HepG2 (cell line): ENCODE measurements at regions of chr2 and their contacts with region 1.

Region 1: GRCh38 chr2:190319555-190320498 is at the start of gene HIBCH:
- DNase-seq: peak; percentile 99
- ATAC-seq: peak; percentile 97
- H3K4me3 ChIP-seq: peak within 1 kb of the TSS; percentile 78 to 86 (median 83)
- H3K27ac ChIP-seq: peak within 1 kb of the TSS; percentile 74
- H3K4me1 ChIP-seq: peaks cover 49% of the 10 kb centered on the region
- H3K27me3 ChIP-seq: no peaks in the 10 kb centered on the region; a peak in 1 of 5 replicates
- CTCF ChIP-seq: peak; percentile 95
- EP300 ChIP-seq: no peak; a peak in 1 of 4 replicates
- POLR2A ChIP-seq: peak; percentile 86 to 90
- RAD21 ChIP-seq: peak; percentile 69; the same call in 1 of the 2 replicates
- total RNA-seq, gene HIBCH: 49.5 and 67.0 TPM in 2 replicates

Region 2: GRCh38 chr2:190180313-190181122 is 139.3 kb before region 1 on chr2:
- CTCF ChIA-PET with region 1: no interaction called
- POLR2A ChIA-PET with region 1: interaction called, 6 read pairs
- in situ Hi-C with region 1: no loop called
- intact Hi-C with region 1: loop called (anchors 10 kb)
- DNase-seq: peak; percentile 86
- ATAC-seq: peak; percentile 94
- H3K4me3 ChIP-seq: peak overlapping the region; percentile 63 to 89 (median 77)
- H3K27ac ChIP-seq: peak overlapping the region; percentile 64
- H3K4me1 ChIP-seq: peaks cover 23% of the 10 kb centered on the region
- H3K27me3 ChIP-seq: no peaks in the 10 kb centered on the region; a peak in 1 of 5 replicates
- CTCF ChIP-seq: peak; percentile 95
- EP300 ChIP-seq: 0 out of 4 replicates have a peak, but pooled peaks of 1 of the 2 experiments have one; percentile 6
- POLR2A ChIP-seq: peak; percentile 31 to 80
- RAD21 ChIP-seq: peak; percentile 92

Region 3: DNA sequence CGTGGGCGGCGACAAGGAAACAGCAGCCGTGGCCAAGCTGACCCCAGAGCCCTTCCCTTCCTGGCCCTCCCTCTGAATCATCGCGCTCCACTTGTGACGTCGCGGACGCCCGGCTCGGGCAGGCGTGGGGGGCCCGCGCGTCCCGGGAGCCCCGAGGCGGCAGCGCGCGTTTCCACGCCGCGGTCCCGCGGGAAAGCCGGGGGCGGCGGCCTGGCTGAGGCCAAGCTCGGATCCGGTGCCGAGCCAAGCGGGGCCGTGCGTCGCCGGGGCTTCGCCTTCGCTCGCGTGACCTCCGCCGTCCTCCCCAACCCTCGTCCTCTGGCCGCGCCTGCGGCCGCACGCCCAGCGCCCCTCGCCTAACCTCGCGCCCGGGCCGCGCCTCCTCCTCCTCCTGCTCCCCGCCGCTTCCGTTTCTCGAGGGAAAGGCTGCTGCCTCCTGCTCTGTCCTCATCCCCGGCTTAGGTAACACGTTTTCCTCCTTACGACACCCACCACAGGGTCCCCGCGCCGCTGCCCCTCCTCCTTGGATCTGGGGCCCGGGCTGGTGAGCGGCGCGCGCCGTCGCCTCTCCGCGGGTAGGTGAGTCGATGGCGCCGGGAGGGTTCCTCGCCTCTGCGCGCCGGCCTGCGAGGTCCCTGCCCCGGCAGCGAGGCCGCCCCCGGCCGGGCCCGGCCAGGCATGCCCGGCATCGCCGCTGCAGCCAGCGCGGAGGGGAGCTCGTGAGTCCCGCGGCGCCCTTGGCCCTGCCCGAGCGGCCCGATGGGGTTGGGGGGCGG is 23.9 kb after region 1 on chr2 and contains the start of gene INPP1:
- CTCF ChIA-PET with region 1: no interaction called
- POLR2A ChIA-PET with region 1: interaction called, 14 read pairs
- in situ Hi-C with region 1: no loop called
- intact Hi-C with region 1: no loop called
- DNase-seq: no peak
- ATAC-seq: peak; percentile 88
- H3K4me3 ChIP-seq: peak within 1 kb of the TSS; percentile 71 to 92 (median 75)
- H3K27ac ChIP-seq: peak within 1 kb of the TSS; percentile 59
- H3K4me1 ChIP-seq: peaks cover 50% of the 10 kb centered on the region
- H3K27me3 ChIP-seq: no peaks in the 10 kb centered on the region
- CTCF ChIP-seq: no peak
- EP300 ChIP-seq: no peak
- POLR2A ChIP-seq: peak in 1 of 2 experiments; percentile 30; a peak in 1 of 4 replicates
- RAD21 ChIP-seq: peak; percentile 77; the same call in 1 of the 2 replicates
- total RNA-seq, gene INPP1: 13.3 and 15.2 TPM in 2 replicates

Region 4: DNA sequence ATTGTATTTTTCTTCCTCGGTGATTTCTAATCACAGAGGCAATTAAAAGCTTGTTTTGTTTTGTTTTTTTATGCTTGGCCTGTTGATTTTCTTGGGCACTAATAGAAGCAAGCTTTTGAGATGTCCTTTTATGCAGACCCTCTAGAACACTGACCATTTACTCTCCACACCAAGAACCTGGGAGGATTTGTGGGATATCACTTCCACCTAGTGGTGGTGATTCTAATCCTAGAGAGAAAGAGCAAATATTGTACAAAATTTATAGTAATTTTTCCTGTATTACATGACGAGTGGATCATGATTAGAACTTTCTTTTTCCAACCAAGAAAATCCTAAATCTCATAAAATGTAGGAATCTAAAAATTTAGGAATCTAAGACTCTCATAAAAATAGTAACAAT is 191.3 kb after region 1 on chr2:
- CTCF ChIA-PET with region 1: no interaction called
- POLR2A ChIA-PET with region 1: no interaction called
- in situ Hi-C with region 1: loop called (anchors 25 kb)
- intact Hi-C with region 1: loop called (anchors 2 kb)
- DNase-seq: peak; percentile 54
- ATAC-seq: peak; percentile 67
- H3K4me3 ChIP-seq: no peak overlapping the region
- H3K27ac ChIP-seq: no peak overlapping the region
- H3K4me1 ChIP-seq: no peaks in the 10 kb centered on the region
- H3K27me3 ChIP-seq: no peaks in the 10 kb centered on the region
- CTCF ChIP-seq: peak; percentile 63
- EP300 ChIP-seq: no peak
- POLR2A ChIP-seq: no peak
- RAD21 ChIP-seq: peak; percentile 64

Region 5: GRCh38 chr2:190571686-190572085 is 251.9 kb after region 1 on chr2:
- CTCF ChIA-PET with region 1: no interaction called
- POLR2A ChIA-PET with region 1: no interaction called
- in situ Hi-C with region 1: no loop called
- intact Hi-C with region 1: no loop called
- DNase-seq: no peak
- ATAC-seq: no peak
- H3K4me3 ChIP-seq: no peak overlapping the region
- H3K27ac ChIP-seq: no peak overlapping the region
- H3K4me1 ChIP-seq: peaks cover 7% of the 10 kb centered on the region; the same call in 1 of the 2 replicates
- H3K27me3 ChIP-seq: no peaks in the 10 kb centered on the region
- CTCF ChIP-seq: no peak
- EP300 ChIP-seq: no peak
- POLR2A ChIP-seq: no peak
- RAD21 ChIP-seq: no peak